Endothelial cell of umbilical vein (primary cell): ENCODE measurements at regions of chr11 and their contacts with region 1.

Region 1: DNA sequence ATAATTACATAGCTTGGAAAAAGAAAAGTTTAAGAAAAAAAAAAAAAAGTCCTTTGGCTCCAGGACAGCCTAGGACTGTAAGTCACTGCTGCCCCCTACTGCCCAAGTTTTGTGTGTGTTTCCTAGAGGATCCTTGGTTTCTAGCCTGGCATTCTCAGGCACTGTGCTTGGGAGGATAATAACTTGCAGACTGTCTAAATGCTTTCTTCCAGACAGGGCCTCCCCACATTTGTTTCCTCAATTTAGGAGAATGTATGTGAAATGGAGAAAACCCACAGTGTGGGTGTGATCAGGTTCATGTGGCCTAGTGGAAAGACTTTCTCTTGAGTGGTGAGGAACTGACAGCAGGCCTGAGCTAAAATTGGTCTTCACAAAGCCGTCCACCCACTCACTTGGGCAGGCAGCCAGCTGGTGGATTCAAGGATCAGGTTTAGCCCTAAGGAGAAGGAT is 191.0 kb downstream of the NAV2 start:
- DNase-seq: peak; percentile 74
- H3K4me3 ChIP-seq: no peak overlapping the region
- H3K27ac ChIP-seq: no peak overlapping the region
- H3K4me1 ChIP-seq: no peaks in the 10 kb centered on the region
- H3K27me3 ChIP-seq: no peaks in the 10 kb centered on the region
- CTCF ChIP-seq: peak; percentile 79 to 82
- POLR2A ChIP-seq: no peak

Region 2: DNA sequence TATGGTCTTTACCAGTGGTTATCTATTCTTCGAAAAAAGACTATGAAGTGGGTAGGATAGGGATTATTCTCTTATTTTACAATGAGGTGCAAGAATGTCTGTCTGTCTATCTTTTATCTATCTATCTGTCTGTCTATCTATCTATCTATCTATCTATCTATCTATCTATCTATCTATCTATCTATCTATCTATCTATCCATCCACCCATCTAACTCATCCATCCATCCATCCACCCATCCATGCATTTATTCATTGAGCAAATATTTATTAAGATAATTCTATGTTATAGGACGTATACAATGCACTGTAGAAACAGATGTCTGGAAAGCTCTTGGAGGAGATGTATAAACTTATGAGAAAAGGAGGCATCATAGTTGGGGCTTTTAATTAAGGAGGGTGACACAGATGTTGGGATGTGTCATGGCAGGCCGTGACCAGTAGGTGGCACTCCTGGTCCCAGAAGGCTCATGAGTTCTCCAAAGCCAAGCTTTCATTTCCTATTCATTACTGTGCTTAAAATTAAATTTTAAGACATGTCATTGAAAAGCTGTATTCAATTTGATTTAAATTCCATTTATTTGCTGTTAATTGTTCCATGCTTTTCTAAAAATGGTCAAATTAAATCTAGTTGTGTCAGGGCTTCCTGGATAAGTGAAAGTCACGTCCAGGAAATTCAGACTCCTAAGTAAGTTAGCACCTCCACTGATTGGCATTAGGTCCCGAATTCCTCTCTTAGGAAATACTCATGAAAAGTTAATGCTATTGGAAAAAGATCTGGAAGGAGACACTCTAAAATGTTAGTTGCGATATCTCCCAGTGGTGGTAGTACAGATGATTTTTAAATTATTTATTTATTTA is 643.9 kb before region 1 on chr11:
- CTCF ChIA-PET with region 1: no interaction called
- POLR2A ChIA-PET with region 1: no interaction called
- dilution Hi-C with region 1: no loop called
- intact Hi-C with region 1: loop called (anchors 10 kb)
- DNase-seq: peak; percentile 73
- H3K4me3 ChIP-seq: peak overlapping the region in 1 of 3 experiments; percentile 30
- H3K27ac ChIP-seq: no peak overlapping the region
- H3K4me1 ChIP-seq: no peaks in the 10 kb centered on the region
- H3K27me3 ChIP-seq: peaks cover 9 to 11% of the 10 kb centered on the region in 2 experiments
- CTCF ChIP-seq: peak; percentile 87 to 95
- POLR2A ChIP-seq: no peak

Region 3: GRCh38 chr11:19566583-19567379 is 336.9 kb before region 1 on chr11:
- CTCF ChIA-PET with region 1: interaction called, 59 read pairs
- POLR2A ChIA-PET with region 1: no interaction called
- dilution Hi-C with region 1: no loop called
- intact Hi-C with region 1: loop called (anchors 1 kb)
- DNase-seq: no peak
- H3K4me3 ChIP-seq: no peak overlapping the region
- H3K27ac ChIP-seq: no peak overlapping the region
- H3K4me1 ChIP-seq: peaks cover 5% of the 10 kb centered on the region
- H3K27me3 ChIP-seq: no peaks in the 10 kb centered on the region
- CTCF ChIP-seq: no peak
- POLR2A ChIP-seq: no peak

Region 4: GRCh38 chr11:19777377-19778102 is 126.1 kb before region 1 on chr11:
- CTCF ChIA-PET with region 1: interaction called, 6 read pairs
- POLR2A ChIA-PET with region 1: no interaction called
- dilution Hi-C with region 1: no loop called
- intact Hi-C with region 1: loop called (anchors 1 kb)
- DNase-seq: peak; percentile 82
- H3K4me3 ChIP-seq: peak overlapping the region; percentile 18 to 60 (median 57)
- H3K27ac ChIP-seq: peak overlapping the region; percentile 38
- H3K4me1 ChIP-seq: peaks cover 14% of the 10 kb centered on the region
- H3K27me3 ChIP-seq: no peaks in the 10 kb centered on the region
- CTCF ChIP-seq: no peak
- POLR2A ChIP-seq: no peak

Region 5: GRCh38 chr11:19876750-19877149 is 26.9 kb before region 1 on chr11:
- CTCF ChIA-PET with region 1: interaction called, 10 read pairs
- POLR2A ChIA-PET with region 1: no interaction called
- dilution Hi-C with region 1: no loop called
- intact Hi-C with region 1: no loop called
- DNase-seq: no peak
- H3K4me3 ChIP-seq: no peak overlapping the region
- H3K27ac ChIP-seq: no peak overlapping the region
- H3K4me1 ChIP-seq: peaks cover 14% of the 10 kb centered on the region
- H3K27me3 ChIP-seq: no peaks in the 10 kb centered on the region
- CTCF ChIP-seq: no peak
- POLR2A ChIP-seq: no peak

Region 6: DNA sequence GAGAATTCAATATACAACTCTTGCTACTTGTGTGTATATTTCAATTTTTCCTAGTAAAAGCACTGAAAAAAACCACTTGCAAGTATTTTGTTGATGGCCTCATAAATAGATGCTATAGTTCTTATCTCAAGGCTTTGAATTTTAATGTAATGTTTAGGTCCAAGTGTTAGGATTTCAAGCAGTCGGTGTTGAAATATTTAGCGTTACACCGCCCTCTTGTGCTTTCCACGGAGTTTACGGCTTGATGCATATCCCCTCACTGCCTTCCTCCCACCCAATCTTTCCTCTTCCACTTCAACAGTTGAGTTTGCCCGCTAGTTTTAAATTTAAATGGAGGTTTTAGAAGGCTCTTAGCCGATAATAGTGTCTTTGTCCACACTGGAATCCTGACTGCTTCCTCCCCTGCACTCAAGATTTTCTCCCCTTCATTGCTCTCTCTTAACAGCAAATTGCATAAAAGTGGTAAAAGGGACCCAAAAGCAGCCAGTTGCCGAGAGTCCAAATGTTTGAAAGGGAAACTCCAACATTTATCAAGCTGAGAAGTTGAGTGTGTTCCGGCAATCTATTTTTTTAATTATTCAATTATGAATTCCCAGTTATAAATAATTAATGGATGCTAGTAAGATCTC is 434.0 kb after region 1 on chr11:
- CTCF ChIA-PET with region 1: no interaction called
- POLR2A ChIA-PET with region 1: no interaction called
- dilution Hi-C with region 1: no loop called
- intact Hi-C with region 1: loop called (anchors 1 kb)
- DNase-seq: peak; percentile 43
- H3K4me3 ChIP-seq: no peak overlapping the region
- H3K27ac ChIP-seq: no peak overlapping the region
- H3K4me1 ChIP-seq: no peaks in the 10 kb centered on the region
- H3K27me3 ChIP-seq: peaks cover 28 to 63% of the 10 kb centered on the region in 2 experiments
- CTCF ChIP-seq: peak; percentile 13 to 47
- POLR2A ChIP-seq: no peak